ENCODE measurements at regions of chr6 and their contacts with region 1.

Region 1: DNA sequence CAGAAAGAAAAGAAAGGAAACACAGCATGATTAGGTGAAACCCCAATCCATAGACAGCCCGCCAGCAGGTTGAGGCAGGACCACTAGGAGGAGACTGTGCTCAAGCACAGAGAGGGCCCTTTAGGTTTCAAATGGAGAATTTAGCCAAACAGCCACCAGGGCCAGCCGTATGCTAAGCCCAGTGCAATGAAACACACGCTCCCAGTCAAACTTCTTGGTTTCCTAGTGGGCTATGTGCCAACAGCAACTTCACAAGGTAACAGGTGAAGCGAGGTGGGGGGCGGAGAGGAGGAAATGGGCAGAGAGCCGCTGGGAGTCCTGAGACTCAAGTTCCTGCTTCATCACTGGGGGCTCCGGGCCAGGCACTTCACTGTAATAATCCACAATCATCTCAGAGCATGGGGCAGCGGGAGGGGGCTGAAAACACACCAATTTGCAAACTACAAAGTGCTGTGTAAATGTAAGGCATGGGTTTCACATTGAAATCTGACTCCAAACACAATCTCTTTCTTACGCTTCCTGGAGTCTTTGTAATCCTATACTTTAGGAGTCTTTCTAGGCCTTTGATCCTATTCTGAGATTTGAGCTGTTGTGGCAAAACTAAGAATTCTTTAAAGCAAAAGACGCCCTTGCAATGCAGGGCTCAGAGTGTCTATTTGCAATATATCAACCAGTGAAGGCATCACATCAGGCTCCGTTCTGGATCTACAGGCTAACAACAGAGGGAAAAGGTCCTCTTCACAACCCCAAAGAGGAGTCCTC is 117.3 kb downstream of the OPRM1 start:
- DNase-seq: peak; percentile 33 to 80 (median 56)
- ATAC-seq: peak; percentile 79 to 91 (median 84)
- H3K4me3 ChIP-seq: peak overlapping the region; percentile 31 to 32
- H3K4me3 Mint-ChIP-seq: peak overlapping the region; percentile 69 to 80 (median 76)
- H3K27ac ChIP-seq: peak overlapping the region; percentile 84
- H3K27ac Mint-ChIP-seq: peak overlapping the region; percentile 95 to 97
- H3K4me1 ChIP-seq: peaks cover 22 to 32% of the 10 kb centered on the region in 2 experiments
- H3K4me1 Mint-ChIP-seq: peaks cover 53 to 62% (median 60%) of the 10 kb centered on the region in 3 donors
- H3K27me3 ChIP-seq: no peaks in the 10 kb centered on the region
- H3K27me3 Mint-ChIP-seq: no peaks in the 10 kb centered on the region

Region 2: DNA sequence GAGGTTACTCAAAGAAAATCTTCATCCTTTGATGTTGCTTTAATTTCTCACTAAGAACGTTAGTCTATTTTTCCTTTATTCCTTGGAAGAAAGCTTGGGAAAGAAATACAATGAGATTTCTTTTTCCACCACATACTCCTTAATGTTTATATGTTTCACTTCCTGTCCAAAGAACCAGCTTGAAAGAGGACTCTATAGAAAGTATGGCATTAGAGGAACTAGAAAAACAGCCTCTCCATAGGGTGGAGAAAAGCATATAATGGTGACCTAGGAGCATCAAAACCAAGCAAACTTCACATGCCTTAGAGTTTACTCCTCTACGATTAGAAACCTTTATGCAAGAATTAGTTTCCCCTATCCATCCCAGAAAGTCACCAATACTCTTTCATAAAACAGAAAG is 13.8 kb after region 1 on chr6:
- CTCF ChIA-PET with region 1: interaction called, 10 to 11 read pairs
- POLR2A ChIA-PET with region 1: interaction called in 1 of 2 experiments, 3 read pairs
- DNase-seq: no peak
- ATAC-seq: no peak
- H3K4me3 ChIP-seq: no peak overlapping the region
- H3K4me3 Mint-ChIP-seq: no peak overlapping the region
- H3K27ac ChIP-seq: peak overlapping the region; percentile 28
- H3K27ac Mint-ChIP-seq: peak overlapping the region; percentile 83 to 87
- H3K4me1 ChIP-seq: peaks cover 0 to 27% of the 10 kb centered on the region in 2 experiments
- H3K4me1 Mint-ChIP-seq: peaks cover 84 to 91% (median 87%) of the 10 kb centered on the region in 3 donors
- H3K27me3 ChIP-seq: no peaks in the 10 kb centered on the region
- H3K27me3 Mint-ChIP-seq: no peaks in the 10 kb centered on the region

Region 3: DNA sequence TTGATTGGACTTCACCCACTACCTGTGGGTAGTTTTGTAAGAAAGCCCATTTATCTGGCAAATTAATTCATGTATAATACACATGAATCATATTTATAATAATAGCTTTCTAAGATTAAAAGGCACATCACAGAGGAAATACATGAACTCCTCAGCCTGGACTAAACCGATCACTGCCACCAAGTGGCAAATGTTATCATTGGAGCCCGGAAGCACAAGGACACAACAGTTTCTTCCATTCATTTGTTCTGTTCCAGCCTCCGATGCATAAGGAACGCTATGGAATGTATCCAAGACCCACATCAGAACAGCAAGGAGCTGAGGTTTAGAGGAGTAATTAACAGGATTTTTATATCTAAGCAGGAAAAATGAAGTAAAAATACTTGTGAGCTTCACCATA is 214.2 kb after region 1 on chr6:
- CTCF ChIA-PET with region 1: interaction called, 14 to 22 read pairs
- POLR2A ChIA-PET with region 1: interaction called in 1 of 2 experiments, 3 read pairs
- DNase-seq: peak in 20 of 35 experiments; percentile 3 to 49 (median 12)
- ATAC-seq: peak in 2 of 4 experiments; percentile 31 to 43
- H3K4me3 ChIP-seq: no peak overlapping the region
- H3K4me3 Mint-ChIP-seq: no peak overlapping the region
- H3K27ac ChIP-seq: no peak overlapping the region
- H3K27ac Mint-ChIP-seq: no peak overlapping the region
- H3K4me1 ChIP-seq: no peaks in the 10 kb centered on the region
- H3K4me1 Mint-ChIP-seq: peaks cover 0 to 6% (median 4%) of the 10 kb centered on the region in 3 donors
- H3K27me3 ChIP-seq: no peaks in the 10 kb centered on the region
- H3K27me3 Mint-ChIP-seq: peaks cover 0 to 2% of the 10 kb centered on the region in 2 donors